Lower leg skin (tissue), 4 donors: ENCODE measurements at regions of chr5 and their contacts with region 1.

Region 1: GRCh38 chr5:147461915-147462314 is 48.0 kb downstream of the DPYSL3 start:
- DNase-seq: no peak
- H3K4me3 ChIP-seq: no peak overlapping the region
- CTCF ChIP-seq: no peak
- POLR2A ChIP-seq: no peak

Region 2: GRCh38 chr5:147303976-147304375 is 157.9 kb before region 1 on chr5:
- intact Hi-C with region 1: no loop called
- DNase-seq: no peak
- H3K4me3 ChIP-seq: no peak overlapping the region
- CTCF ChIP-seq: no peak
- POLR2A ChIP-seq: no peak

Region 3: DNA sequence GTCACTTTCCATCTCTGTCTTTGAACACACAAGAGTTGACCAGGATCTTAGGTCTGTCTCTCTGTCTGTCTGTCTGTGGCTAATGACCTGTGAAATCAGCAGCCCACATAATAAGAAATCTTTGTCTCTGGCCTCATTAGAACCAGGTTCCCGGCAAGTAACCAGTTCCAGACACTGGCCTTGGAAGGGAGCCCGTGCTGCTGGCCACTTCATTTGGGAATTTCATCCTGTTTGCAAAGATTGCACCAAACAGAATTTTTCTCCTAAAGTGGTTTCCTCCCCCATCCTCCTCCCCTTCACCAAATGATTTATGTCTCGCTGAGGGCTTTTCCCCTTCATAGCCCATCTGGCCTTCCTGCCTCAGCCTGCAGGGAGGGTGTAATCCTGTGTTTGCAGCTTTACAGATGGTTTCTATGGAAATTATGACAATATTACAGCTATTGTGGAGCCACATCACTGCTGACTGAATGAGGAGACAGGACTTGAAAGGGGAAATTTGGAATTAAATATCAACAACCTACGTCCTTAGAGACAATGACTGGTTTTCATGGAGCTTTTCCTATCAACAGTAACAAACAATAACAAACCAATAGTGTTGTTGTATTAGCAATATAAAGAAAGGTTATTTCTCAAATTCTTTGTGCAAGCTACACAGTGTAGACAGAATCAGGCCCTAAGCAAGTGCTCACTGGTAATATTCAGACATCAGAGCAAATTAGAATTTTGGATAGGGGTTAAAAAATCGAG is 22.2 kb after region 1 on chr5:
- intact Hi-C with region 1: loop called (anchors 1 kb)
- DNase-seq: peak; percentile 61 to 94
- H3K4me3 ChIP-seq: no peak overlapping the region
- CTCF ChIP-seq: no peak
- POLR2A ChIP-seq: no peak

Region 4: GRCh38 chr5:147613359-147613758 is 151.4 kb after region 1 on chr5:
- intact Hi-C with region 1: no loop called
- DNase-seq: no peak
- H3K4me3 ChIP-seq: no peak overlapping the region
- CTCF ChIP-seq: no peak
- POLR2A ChIP-seq: no peak

Region 5: DNA sequence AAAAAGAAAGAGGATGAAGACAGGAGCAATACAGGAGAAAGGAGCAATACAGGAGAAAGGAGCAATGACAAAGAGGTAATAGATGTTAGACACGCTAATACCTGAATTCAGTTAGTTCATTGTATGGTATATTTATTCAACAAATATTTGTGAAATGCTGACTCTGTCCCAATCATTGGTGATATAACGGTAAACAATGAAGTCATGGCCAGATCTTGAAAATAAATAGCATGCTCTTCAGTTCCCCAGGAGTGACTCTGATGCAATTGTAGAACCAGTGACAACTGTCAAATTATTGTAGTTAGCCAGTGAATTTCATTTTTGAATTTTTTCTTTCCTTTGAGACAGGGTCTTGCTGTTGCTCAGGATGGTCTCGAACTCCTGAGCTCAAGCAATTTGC is 658.4 kb after region 1 on chr5:
- intact Hi-C with region 1: no loop called
- DNase-seq: no peak
- H3K4me3 ChIP-seq: no peak overlapping the region
- CTCF ChIP-seq: no peak
- POLR2A ChIP-seq: no peak